Motor neuron (in vitro differentiated cells): ENCODE measurements at regions of chr9 and their contacts with region 1.

Region 1: DNA sequence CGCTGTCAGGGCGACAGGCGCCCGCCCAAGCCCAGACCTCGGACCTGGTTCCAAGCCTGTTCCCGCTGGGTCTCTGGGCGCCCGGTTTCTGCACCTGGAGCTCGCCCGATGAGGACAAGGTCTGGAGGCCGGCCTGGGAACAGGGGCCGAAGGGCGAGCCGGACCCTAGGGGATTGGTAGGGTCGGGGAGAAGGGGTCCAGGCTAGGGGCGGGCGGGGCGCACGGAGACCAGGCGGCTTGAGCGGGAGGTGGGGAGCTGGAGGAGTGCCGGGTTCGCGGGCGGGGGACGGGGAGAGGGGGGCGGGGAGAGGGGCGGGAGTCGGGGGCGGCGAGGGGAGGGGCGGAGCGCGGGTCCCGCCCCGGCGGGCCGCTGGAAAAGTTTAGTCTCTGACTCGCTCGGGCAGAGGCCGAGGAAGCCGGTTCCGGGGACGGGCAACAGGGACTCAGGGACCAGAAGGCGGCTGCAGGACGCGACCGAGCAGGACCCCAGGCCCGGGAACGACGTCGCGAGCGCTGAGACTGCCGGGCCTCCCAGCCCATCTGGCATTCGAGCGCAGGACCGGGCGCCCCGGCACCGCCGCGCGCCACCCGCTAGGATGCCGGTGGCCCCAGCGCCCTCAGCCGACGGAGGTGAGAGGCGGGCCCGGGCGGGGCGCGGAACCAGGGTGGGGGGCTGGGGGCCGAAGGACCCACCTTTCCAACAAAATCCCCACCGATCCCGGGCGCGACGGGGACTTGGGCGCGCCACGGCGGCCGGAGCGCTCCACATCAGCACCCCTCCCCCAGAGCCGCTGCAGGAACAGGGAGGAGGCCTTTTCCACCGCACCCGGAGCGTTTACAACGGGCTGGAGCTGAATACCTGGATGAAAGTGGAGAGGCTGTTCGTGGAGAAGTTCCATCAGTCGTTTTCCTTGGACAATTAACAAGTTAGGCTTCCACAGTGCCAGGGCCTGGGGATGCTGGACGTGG is at the start of gene S1PR3:
- ATAC-seq: peak; percentile 66 to 85 (median 79)
- H3K4me3 ChIP-seq: peak within 1 kb of the TSS; percentile 32 to 61 (median 47)
- H3K27ac ChIP-seq: no peak within 1 kb of the TSS
- H3K4me1 ChIP-seq: peaks cover 7 to 8% of the 10 kb centered on the region in 2 donors
- total RNA-seq, gene S1PR3: 0.54 to 117 (median 4.2) TPM

Region 2: GRCh38 chr9:87678650-87679515 is 1312.5 kb before region 1 on chr9:
- in situ Hi-C with region 1: loop called in 1 of 9 experiments (anchors 25 kb)
- ATAC-seq: peak; percentile 52 to 75 (median 72)
- H3K4me3 ChIP-seq: no peak overlapping the region
- H3K27ac ChIP-seq: no peak overlapping the region
- H3K4me1 ChIP-seq: peaks cover 3 to 6% of the 10 kb centered on the region in 2 donors

Region 3: DNA sequence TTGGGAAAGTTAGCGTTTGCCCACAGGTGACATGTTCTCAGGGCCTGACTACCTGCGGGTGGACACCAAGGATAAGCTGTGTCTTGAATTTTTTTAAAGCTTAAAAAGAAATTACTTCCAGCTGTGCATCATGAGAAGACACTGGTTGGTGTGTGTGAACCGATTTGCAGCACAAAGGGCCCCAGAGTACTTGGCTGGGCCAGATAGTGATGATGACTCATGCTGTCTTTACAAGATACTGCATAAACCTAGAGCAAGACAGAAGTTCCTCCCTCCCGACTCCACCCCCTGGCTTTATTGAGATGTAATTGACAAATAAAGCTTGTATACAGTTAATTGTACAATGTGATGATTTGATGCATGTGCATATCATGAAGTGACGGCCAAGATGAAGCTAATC is 243.6 kb before region 1 on chr9:
- in situ Hi-C with region 1: loop called in 2 of 9 experiments (anchors 25 kb)
- ATAC-seq: peak; percentile 82 to 99 (median 93)
- H3K4me3 ChIP-seq: no peak overlapping the region
- H3K27ac ChIP-seq: no peak overlapping the region
- H3K4me1 ChIP-seq: peaks cover 15% of the 10 kb centered on the region in 2 donors

Region 4: DNA sequence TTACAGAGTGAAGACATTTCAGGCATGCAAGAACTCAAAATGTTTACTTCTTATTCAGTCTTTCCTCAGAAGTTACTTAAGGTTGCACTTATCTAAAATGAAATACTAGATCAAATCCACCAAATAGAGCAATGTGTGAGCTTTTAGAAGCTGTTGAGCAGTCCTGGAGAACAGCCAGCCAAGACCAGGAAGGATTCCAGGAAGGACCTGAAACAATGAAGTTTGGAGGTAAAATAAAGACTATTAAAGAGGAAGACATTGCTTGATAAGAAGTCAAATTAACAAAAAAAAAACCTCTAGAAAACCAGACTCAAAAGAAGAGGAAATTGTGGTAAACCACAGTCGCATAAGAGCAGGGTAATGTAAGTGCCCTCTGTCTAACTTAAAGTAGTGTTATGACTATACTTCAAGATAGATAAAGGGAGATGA is 156.3 kb before region 1 on chr9:
- in situ Hi-C with region 1: loop called in 1 of 9 experiments (anchors 25 kb)
- ATAC-seq: no peak
- H3K4me3 ChIP-seq: no peak overlapping the region
- H3K27ac ChIP-seq: no peak overlapping the region
- H3K4me1 ChIP-seq: peaks cover 0 to 4% of the 10 kb centered on the region in 2 donors